IMR-90 (cell line): ENCODE measurements at regions of chr13 and their contacts with region 1.

Region 1: DNA sequence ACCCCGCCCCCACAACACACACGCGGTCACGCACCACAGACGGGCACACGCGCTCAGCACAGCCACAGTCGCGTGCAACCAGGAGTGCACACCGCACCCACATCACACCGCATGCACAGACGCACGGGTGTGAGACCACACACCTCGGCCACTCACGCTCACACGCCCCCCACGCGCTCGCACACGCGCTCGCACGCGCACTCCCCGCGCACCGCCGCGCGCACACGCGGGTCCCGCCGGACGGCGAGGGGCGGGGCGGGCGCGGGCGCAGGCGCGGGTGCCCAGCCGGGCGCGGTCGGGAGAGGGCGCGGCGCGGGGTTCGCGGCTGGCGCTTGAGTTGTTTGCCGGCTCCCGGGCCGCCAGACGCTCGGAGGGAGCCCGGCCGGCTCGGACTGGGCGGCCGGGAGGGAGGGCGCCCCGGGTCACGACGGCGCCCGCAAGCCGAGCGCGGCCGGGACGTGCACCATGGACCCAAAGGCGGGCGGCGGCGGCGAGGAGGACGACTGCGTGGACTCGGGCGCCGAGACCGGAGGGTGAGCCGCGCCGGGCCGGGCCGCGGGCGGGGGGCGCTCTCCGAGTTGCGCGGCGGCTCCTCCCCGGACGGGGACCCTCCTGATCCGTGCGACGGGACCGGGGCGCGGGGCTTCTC is at the start of gene FAM124A:
- DNase-seq: peak; percentile 4
- ATAC-seq: peak; percentile 98
- H3K4me3 ChIP-seq: peak within 1 kb of the TSS; percentile 87
- H3K27ac ChIP-seq: no peak within 1 kb of the TSS
- H3K4me1 ChIP-seq: no peaks in the 10 kb centered on the region
- H3K27me3 ChIP-seq: peaks cover 62% of the 10 kb centered on the region
- CTCF ChIP-seq: peak; percentile 35
- POLR2A ChIP-seq: no peak
- RAD21 ChIP-seq: peak; percentile 21; the same call in 1 of the 2 replicates
- total RNA-seq, gene FAM124A: not detected in 2 replicates

Region 2: DNA sequence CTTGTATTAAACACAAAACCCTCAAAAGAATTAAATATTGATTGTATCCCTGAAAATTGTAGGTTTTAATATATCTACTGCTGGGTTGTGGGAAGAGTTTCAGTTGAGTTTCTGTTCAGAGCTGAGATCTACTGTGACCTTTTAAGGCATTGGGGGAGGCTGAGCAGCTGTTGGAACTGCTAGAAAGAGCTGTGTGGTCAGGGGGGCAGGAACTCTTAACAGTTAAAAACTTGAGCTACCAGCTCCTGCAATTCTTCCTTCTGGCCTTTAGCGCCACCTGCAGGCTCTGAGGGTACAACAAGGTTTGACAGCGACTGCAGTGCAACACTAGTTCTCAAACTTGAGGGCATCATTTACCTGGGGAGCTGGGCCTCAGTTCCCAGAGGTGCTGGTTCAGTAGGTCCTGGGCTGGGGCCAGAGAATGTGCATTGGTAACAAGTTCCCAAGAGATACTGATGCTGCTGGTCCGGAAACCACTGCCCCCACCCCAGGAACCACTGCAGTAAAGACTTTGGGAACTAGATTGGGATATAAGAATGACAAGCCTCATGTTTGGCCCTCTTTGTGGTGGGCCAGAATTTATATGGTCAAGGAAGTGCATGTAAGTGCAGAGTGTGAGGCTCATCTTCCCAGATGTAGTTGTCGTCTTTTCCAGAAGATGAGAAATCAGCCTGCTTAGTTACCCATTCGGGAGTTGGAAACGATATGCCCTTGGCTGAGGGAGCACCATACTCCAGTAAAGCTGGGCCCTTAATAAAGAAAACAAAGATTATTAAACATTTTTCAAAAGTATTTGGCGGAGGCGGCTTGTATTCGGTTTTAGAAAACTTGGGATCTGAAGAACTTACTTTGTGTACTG is 310.0 kb before region 1 on chr13:
- CTCF ChIA-PET with region 1: no interaction called
- POLR2A ChIA-PET with region 1: no interaction called
- dilution Hi-C with region 1: no loop called
- in situ Hi-C with region 1: no loop called
- intact Hi-C with region 1: no loop called
- DNase-seq: peak; percentile 90
- ATAC-seq: peak; percentile 34
- H3K4me3 ChIP-seq: no peak overlapping the region
- H3K27ac ChIP-seq: no peak overlapping the region
- H3K4me1 ChIP-seq: peaks cover 14% of the 10 kb centered on the region
- H3K27me3 ChIP-seq: no peaks in the 10 kb centered on the region
- CTCF ChIP-seq: peak; percentile 82
- POLR2A ChIP-seq: no peak
- RAD21 ChIP-seq: peak; percentile 81

Region 3: DNA sequence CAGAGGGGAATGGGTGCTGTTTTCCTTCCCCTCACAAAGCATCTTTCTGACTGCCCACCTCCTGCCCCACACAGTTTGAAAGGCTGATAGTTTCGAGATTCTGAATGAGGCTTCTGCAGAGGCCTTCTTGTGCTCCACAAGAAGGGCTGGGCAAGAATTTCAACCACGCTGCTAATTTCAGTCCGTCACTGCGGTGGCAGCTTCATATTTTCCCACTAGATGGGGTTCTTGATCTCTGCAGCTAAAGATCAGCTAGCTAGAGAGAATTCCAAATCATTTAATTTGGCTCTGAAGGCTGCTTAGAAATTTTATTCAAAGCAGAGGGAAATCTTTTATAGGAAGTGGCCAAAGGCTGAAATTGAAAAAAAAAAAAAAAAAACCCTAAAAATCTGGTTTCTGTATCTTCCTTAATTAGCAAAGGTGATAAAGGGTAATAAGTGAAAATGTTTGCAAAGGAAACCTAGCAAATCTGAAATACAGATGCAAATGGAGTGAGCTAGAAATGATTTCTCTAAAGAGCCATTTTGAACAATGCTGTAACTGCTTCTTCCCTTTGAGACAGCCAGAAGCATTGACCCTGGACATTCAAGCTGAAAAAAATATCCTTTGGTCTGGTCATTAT is 73.1 kb before region 1 on chr13:
- CTCF ChIA-PET with region 1: no interaction called
- POLR2A ChIA-PET with region 1: no interaction called
- dilution Hi-C with region 1: no loop called
- in situ Hi-C with region 1: no loop called
- intact Hi-C with region 1: loop called (anchors 2 kb)
- DNase-seq: peak; percentile 45
- ATAC-seq: peak; percentile 90
- H3K4me3 ChIP-seq: no peak overlapping the region
- H3K27ac ChIP-seq: no peak overlapping the region
- H3K4me1 ChIP-seq: no peaks in the 10 kb centered on the region
- H3K27me3 ChIP-seq: peaks cover 24% of the 10 kb centered on the region
- CTCF ChIP-seq: peak; percentile 76
- POLR2A ChIP-seq: no peak
- RAD21 ChIP-seq: peak; percentile 75

Region 4: GRCh38 chr13:51234676-51235075 is 12.5 kb after region 1 on chr13:
- CTCF ChIA-PET with region 1: interaction called, 3 read pairs
- POLR2A ChIA-PET with region 1: no interaction called
- dilution Hi-C with region 1: no loop called
- in situ Hi-C with region 1: no loop called
- intact Hi-C with region 1: loop called (anchors 1 kb)
- DNase-seq: no peak
- ATAC-seq: no peak
- H3K4me3 ChIP-seq: no peak overlapping the region
- H3K27ac ChIP-seq: no peak overlapping the region
- H3K4me1 ChIP-seq: peaks cover 2% of the 10 kb centered on the region; the same call in 1 of the 2 replicates
- H3K27me3 ChIP-seq: peaks cover 33% of the 10 kb centered on the region
- CTCF ChIP-seq: no peak
- POLR2A ChIP-seq: no peak
- RAD21 ChIP-seq: no peak

Region 5: GRCh38 chr13:51286135-51287002 is 64.2 kb after region 1 on chr13:
- CTCF ChIA-PET with region 1: interaction called, 4 read pairs
- POLR2A ChIA-PET with region 1: no interaction called
- dilution Hi-C with region 1: no loop called
- in situ Hi-C with region 1: no loop called
- intact Hi-C with region 1: loop called (anchors 1 kb)
- DNase-seq: peak; percentile 43
- ATAC-seq: peak; percentile 98
- H3K4me3 ChIP-seq: no peak overlapping the region
- H3K27ac ChIP-seq: no peak overlapping the region
- H3K4me1 ChIP-seq: no peaks in the 10 kb centered on the region; the same call in 1 of the 2 replicates
- H3K27me3 ChIP-seq: peaks cover 18% of the 10 kb centered on the region
- CTCF ChIP-seq: peak; percentile 81
- POLR2A ChIP-seq: no peak
- RAD21 ChIP-seq: peak; percentile 81

Region 6: DNA sequence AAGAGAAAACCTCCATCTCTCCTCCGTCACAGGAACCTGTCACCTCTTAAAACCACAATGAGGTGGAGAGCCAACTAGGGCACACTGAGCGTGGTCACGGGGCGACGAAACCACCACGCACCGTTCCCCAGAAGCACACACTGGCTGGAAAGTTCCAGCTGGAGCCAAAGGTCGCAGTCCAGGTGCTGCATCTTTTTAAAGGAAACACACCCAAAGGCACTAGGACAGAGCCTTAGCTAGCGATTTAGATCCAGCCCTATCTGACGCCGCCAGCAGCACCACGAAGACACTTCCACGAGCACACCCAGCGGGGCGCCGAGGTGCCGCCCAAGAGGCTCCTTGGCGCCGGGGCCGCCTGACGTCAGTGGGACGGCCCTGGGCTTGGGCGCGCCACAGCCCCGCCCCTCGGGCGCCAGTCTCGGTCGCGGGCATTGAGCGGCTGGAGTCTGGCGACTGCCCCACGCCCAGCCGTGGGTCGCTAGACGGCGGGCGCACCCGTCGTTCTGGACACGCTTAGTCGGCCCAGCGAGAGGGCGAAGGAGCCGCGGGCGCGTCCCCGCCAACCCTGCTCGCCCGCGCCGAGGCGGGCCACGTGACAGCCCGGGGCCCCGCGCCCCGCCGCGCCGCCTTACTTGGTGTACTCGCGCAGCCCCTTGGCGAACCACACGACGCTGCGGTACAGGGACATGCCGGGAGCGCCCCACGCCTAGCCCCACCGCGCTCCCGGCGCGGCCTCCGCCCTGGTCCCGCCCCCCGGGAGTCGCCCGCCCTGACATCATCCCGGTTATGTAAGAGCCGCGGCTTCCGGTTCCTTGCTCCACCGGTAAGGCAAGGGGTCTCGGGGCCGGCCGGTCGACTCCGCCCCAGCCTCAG is 581.5 kb after region 1 on chr13 and contains the start of gene DHRS12:
- CTCF ChIA-PET with region 1: no interaction called
- POLR2A ChIA-PET with region 1: no interaction called
- dilution Hi-C with region 1: no loop called
- in situ Hi-C with region 1: no loop called
- intact Hi-C with region 1: loop called (anchors 10 kb)
- DNase-seq: peak; percentile 66
- ATAC-seq: peak; percentile 96
- H3K4me3 ChIP-seq: peak within 1 kb of the TSS; percentile 84
- H3K27ac ChIP-seq: peak within 1 kb of the TSS; percentile 40; the same call in 1 of the 2 replicates
- H3K4me1 ChIP-seq: peaks cover 4% of the 10 kb centered on the region
- H3K27me3 ChIP-seq: no peaks in the 10 kb centered on the region
- CTCF ChIP-seq: no peak
- POLR2A ChIP-seq: peak; percentile 94
- RAD21 ChIP-seq: peak; percentile 26; the same call in 1 of the 2 replicates
- total RNA-seq, gene DHRS12: 1.3 and 1.9 TPM in 2 replicates